ENCODE measurements at regions of chr16 and their contacts with region 1.

Region 1: GRCh38 chr16:50593410-50594150 is 45.4 kb downstream of the NKD1 start:
- DNase-seq: no peak
- ATAC-seq: no peak
- H3K4me3 ChIP-seq: no peak overlapping the region
- H3K27ac ChIP-seq: no peak overlapping the region
- H3K4me1 ChIP-seq: no peaks in the 10 kb centered on the region
- H3K27me3 ChIP-seq: no peaks in the 10 kb centered on the region
- CTCF ChIP-seq: no peak

Region 2: DNA sequence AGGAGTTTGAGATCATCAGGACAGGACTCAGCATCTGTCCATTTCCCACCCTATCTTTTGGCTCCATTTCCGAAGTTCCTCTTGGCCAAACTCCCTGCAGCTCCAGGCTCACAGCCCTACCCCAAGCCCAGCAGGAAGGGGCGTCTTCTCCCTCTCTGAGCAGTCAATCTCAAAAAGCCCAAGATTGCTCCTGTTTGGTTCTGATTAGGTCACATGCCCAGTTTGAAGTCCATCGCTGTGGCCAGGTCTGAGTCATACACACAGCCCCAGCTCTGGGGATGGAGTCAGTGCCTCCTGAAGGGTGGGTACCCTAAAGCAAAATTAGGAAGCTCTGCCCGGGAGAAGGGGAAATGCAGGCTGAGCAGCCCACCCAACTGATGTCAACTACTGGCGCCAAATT is 63.7 kb after region 1 on chr16:
- intact Hi-C with region 1: loop called in 1 of 2 experiments (anchors 10 kb)
- DNase-seq: no peak
- ATAC-seq: no peak
- H3K4me3 ChIP-seq: no peak overlapping the region
- H3K27ac ChIP-seq: no peak overlapping the region
- H3K4me1 ChIP-seq: no peaks in the 10 kb centered on the region
- H3K27me3 ChIP-seq: no peaks in the 10 kb centered on the region
- CTCF ChIP-seq: no peak